ENCODE measurements at regions of chr10 and their contacts with region 1.

Region 1: DNA sequence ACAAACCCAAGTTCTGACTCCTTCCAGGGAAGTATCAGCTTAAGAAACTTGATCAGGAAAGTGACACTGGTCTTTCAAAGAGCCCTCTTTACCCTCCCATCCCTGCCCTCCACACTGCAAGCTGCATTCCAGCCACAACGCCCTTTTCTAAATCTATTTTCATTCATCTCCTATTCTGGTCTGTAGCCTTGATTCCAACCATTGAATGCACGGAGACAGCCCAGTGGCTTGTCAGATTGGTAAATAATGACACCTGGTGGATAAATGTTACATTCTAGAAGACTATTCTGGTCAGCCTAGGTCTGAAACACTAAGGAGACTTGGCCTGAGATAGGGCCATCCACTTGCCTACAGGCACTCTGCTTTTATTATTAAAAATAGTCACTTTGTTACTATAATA is 20.9 kb downstream of the MORN4 start:
- H3K4me3 Mint-ChIP-seq: no peak overlapping the region
- H3K27ac Mint-ChIP-seq: no peak overlapping the region
- H3K4me1 Mint-ChIP-seq: no peaks in the 10 kb centered on the region
- H3K27me3 Mint-ChIP-seq: no peaks in the 10 kb centered on the region

Region 2: GRCh38 chr10:97572214-97572989 is 40.0 kb before region 1 on chr10 and contains the start of gene ANKRD2:
- intact Hi-C with region 1: loop called (anchors 5 kb)
- H3K4me3 Mint-ChIP-seq: no peak within 1 kb of the TSS
- H3K27ac Mint-ChIP-seq: no peak within 1 kb of the TSS
- H3K4me1 Mint-ChIP-seq: no peaks in the 10 kb centered on the region
- H3K27me3 Mint-ChIP-seq: peaks cover under 1% of the 10 kb centered on the region

Measured in dendritic cell treated with granulocyte-macrophage colony-stimulating factor and Interleukin-4, amounts not matched to agents 40 ng/mL and 50 ng/mL, for 4 days (primary cell).